MCF 10A (cell line): ENCODE measurements at regions of chr2 and their contacts with region 1.

Region 1: DNA sequence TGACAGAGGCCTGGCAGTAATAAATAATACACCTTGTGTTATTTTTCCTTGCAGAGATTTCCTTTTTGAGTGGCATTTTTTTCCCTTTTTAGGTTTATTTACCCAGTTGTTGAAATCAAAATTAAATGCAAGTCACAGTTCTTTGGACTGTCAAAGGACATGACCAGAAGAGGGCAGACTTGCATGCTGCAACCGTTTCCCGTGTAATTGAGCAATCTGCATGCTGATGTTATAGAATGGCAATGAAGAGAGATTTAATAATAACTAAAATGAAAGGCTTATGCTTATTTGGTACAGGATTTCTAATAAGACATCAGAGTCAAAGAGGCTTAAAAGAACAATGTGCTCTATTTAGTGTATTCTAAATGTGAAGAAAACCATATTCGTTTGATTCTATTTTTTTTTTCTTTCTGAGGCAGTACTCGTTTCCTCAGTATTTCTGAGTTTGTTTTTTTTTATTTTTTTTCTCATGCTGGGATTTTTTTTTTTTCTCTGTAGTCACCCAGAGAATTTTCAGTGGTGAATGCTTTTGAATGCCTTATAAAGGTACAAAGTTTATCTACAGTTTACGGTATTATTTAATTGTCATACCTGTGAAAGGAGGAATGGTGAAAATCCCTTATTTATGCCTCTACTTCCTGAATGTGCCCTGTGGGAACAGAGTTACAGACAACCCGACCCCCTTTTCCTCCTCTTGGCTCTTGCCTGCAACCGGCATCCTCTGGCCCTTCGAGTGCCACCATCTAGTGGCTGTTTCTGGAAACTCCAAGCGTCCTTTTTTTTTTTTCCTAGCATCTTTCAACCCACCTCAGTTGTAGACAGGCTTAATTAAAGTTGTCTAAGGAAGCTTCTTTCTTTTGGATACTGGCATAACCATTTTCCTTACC is 368.5 kb downstream of the LRRTM1 start:
- DNase-seq: peak; percentile 76
- H3K4me3 Mint-ChIP-seq: peak overlapping the region; percentile 69
- H3K27ac Mint-ChIP-seq: peak overlapping the region; percentile 37
- H3K4me1 Mint-ChIP-seq: peaks cover 11% of the 10 kb centered on the region
- H3K27me3 Mint-ChIP-seq: peaks cover 12% of the 10 kb centered on the region
- CTCF ChIP-seq: peak; percentile 65

Region 2: DNA sequence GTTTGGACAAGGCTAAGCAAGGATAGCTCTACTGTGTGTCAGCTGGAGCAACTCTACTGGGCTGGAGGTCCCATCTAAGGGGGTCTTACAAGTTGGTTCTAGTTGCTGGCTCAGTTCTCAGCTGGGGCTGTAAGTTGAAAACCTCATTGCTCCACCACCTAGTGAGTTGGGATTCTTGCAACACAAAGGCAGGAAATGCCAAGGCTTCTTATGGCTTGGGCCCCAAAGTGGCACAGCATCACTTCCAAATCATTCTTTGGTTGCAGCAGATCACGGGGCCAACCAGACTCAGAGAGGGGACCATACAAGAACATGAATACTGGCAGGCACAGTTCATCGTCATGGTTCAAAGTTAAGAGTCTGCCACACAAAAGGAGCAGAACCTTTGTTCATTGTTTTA is 35.8 kb after region 1 on chr2:
- CTCF ChIA-PET with region 1: no interaction called
- POLR2A ChIA-PET with region 1: no interaction called
- intact Hi-C with region 1: no loop called
- DNase-seq: no peak
- H3K4me3 Mint-ChIP-seq: no peak overlapping the region
- H3K27ac Mint-ChIP-seq: no peak overlapping the region
- H3K4me1 Mint-ChIP-seq: no peaks in the 10 kb centered on the region
- H3K27me3 Mint-ChIP-seq: no peaks in the 10 kb centered on the region
- CTCF ChIP-seq: no peak

Region 3: GRCh38 chr2:79982445-79982844 is 46.4 kb after region 1 on chr2:
- CTCF ChIA-PET with region 1: interaction called, 5 read pairs
- POLR2A ChIA-PET with region 1: no interaction called
- intact Hi-C with region 1: loop called (anchors 1 kb)
- DNase-seq: peak; percentile 55
- H3K4me3 Mint-ChIP-seq: no peak overlapping the region
- H3K27ac Mint-ChIP-seq: no peak overlapping the region
- H3K4me1 Mint-ChIP-seq: no peaks in the 10 kb centered on the region
- H3K27me3 Mint-ChIP-seq: no peaks in the 10 kb centered on the region
- CTCF ChIP-seq: peak; percentile 36

Region 4: DNA sequence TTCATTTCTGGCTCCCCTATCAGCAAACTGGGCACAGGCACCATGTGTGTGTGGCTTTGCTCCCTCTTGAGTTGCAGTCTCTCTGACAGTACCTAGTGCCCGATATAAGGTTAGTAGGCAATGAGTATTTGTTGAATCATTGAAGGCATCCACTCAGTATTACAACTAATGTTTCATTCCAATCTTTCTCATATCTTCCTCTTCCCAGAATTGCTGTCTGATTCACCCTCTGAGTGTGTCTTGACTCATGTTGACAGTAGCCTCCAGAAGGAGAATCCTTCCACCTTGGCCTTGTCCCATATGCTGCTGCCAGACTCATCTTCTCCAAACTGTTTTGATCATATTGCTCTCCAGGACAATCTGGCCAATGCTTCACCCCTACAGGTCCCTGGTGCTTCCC is 166.0 kb after region 1 on chr2:
- CTCF ChIA-PET with region 1: no interaction called
- POLR2A ChIA-PET with region 1: no interaction called
- intact Hi-C with region 1: no loop called
- DNase-seq: peak; percentile 81
- H3K4me3 Mint-ChIP-seq: no peak overlapping the region
- H3K27ac Mint-ChIP-seq: peak overlapping the region; percentile 4
- H3K4me1 Mint-ChIP-seq: peaks cover 9% of the 10 kb centered on the region
- H3K27me3 Mint-ChIP-seq: no peaks in the 10 kb centered on the region
- CTCF ChIP-seq: no peak

Region 5: GRCh38 chr2:80348953-80349352 is 412.9 kb after region 1 on chr2:
- CTCF ChIA-PET with region 1: no interaction called
- POLR2A ChIA-PET with region 1: no interaction called
- intact Hi-C with region 1: no loop called
- DNase-seq: no peak
- H3K4me3 Mint-ChIP-seq: no peak overlapping the region
- H3K27ac Mint-ChIP-seq: no peak overlapping the region
- H3K4me1 Mint-ChIP-seq: no peaks in the 10 kb centered on the region
- H3K27me3 Mint-ChIP-seq: no peaks in the 10 kb centered on the region
- CTCF ChIP-seq: no peak